Esophagus muscularis mucosa (tissue), 4 donors: ENCODE measurements at regions of chr10 and their contacts with region 1.

Region 1: GRCh38 chr10:94213001-94213530 is 149.7 kb downstream of the NOC3L start:
- DNase-seq: no peak
- H3K4me3 ChIP-seq: no peak overlapping the region
- H3K27ac ChIP-seq: peak overlapping the region; percentile 59 to 76 (median 68)
- H3K4me1 ChIP-seq: peaks cover 29 to 86% (median 81%) of the 10 kb centered on the region in 4 donors
- H3K27me3 ChIP-seq: no peaks in the 10 kb centered on the region
- CTCF ChIP-seq: no peak
- EP300 ChIP-seq: no peak
- POLR2A ChIP-seq: no peak

Region 2: DNA sequence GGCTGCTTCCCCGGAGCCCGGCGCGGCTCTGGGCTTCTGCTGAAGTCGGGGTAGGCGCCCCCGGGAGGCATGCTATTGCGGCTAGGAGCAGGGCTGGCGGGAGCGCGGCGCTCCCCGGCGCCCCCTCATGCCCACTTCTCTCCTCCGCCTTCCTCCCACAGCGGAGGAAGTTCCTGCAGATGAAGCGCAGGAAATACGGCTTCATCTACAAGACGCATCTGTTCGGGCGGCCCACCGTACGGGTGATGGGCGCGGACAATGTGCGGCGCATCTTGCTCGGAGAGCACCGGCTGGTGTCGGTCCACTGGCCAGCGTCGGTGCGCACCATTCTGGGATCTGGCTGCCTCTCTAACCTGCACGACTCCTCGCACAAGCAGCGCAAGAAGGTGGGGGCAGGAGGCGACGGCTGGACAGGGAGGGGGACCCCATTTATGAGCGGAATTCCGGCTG is 1138.9 kb before region 1 on chr10:
- intact Hi-C with region 1: no loop called
- DNase-seq: peak; percentile 82
- H3K4me3 ChIP-seq: peak overlapping the region; percentile 40 to 52 (median 46)
- H3K27ac ChIP-seq: no peak overlapping the region
- H3K4me1 ChIP-seq: peaks cover 35 to 45% (median 42%) of the 10 kb centered on the region in 4 donors
- H3K27me3 ChIP-seq: peaks cover 10 to 87% (median 36%) of the 10 kb centered on the region in 4 donors
- CTCF ChIP-seq: no peak
- EP300 ChIP-seq: no peak
- POLR2A ChIP-seq: no peak

Region 3: GRCh38 chr10:93224005-93224779 is 988.9 kb before region 1 on chr10:
- intact Hi-C with region 1: no loop called
- DNase-seq: peak; percentile 19
- H3K4me3 ChIP-seq: no peak overlapping the region
- H3K27ac ChIP-seq: no peak overlapping the region
- H3K4me1 ChIP-seq: no peaks in the 10 kb centered on the region
- H3K27me3 ChIP-seq: peaks cover 0 to 10% (median 0%) of the 10 kb centered on the region in 4 donors
- CTCF ChIP-seq: no peak
- EP300 ChIP-seq: no peak
- POLR2A ChIP-seq: no peak

Region 4: GRCh38 chr10:94108200-94108599 is 104.9 kb before region 1 on chr10:
- intact Hi-C with region 1: loop called (anchors 10 kb)
- DNase-seq: no peak
- H3K4me3 ChIP-seq: no peak overlapping the region
- H3K27ac ChIP-seq: no peak overlapping the region
- H3K4me1 ChIP-seq: peaks cover 17 to 52% (median 33%) of the 10 kb centered on the region in 4 donors
- H3K27me3 ChIP-seq: no peaks in the 10 kb centered on the region
- CTCF ChIP-seq: no peak
- EP300 ChIP-seq: no peak
- POLR2A ChIP-seq: no peak